Sigmoid colon (tissue), 7 donors: ENCODE measurements at regions of chr1 and their contacts with region 1.

Region 1: DNA sequence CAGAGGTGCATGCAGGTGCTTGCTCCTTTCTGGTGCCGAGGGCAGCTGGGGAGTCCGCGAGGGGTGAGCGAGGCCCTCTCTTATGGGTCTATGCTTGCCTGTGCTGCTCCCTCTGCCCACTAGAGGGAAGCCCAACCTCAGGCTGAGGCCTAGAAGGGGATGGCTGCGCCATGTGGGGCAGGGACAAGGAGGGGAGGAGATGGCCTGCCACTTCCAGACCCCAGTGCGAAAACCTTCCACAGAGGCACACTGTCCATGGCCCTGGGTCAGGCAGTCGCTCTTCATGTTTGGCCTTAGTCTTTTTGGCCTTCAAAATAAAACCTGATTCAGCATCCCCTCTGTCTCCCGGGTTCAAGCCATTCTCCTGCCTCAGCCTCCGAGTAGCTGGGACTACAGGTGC is 14.0 kb downstream of the RHBG start:
- DNase-seq: no peak
- H3K4me3 ChIP-seq: no peak overlapping the region
- H3K27ac ChIP-seq: no peak overlapping the region
- H3K4me1 ChIP-seq: peaks cover 0 to 3% (median 1%) of the 10 kb centered on the region in 4 donors
- H3K27me3 ChIP-seq: peaks cover 2 to 9% (median 4%) of the 10 kb centered on the region in 3 donors
- CTCF ChIP-seq: peak; percentile 28 to 79 (median 59)
- EP300 ChIP-seq: no peak
- POLR2A ChIP-seq: no peak

Region 2: GRCh38 chr1:156445789-156446263 is 62.8 kb after region 1 on chr1:
- intact Hi-C with region 1: loop called (anchors 1 kb)
- DNase-seq: peak; percentile 86
- H3K4me3 ChIP-seq: no peak overlapping the region
- H3K27ac ChIP-seq: no peak overlapping the region
- H3K4me1 ChIP-seq: peaks cover 0 to 4% (median 2%) of the 10 kb centered on the region in 4 donors
- H3K27me3 ChIP-seq: peaks cover under 1 to 46% (median 10%) of the 10 kb centered on the region in 3 donors
- CTCF ChIP-seq: peak; percentile 89 to 97 (median 93)
- EP300 ChIP-seq: no peak
- POLR2A ChIP-seq: no peak

Region 3: DNA sequence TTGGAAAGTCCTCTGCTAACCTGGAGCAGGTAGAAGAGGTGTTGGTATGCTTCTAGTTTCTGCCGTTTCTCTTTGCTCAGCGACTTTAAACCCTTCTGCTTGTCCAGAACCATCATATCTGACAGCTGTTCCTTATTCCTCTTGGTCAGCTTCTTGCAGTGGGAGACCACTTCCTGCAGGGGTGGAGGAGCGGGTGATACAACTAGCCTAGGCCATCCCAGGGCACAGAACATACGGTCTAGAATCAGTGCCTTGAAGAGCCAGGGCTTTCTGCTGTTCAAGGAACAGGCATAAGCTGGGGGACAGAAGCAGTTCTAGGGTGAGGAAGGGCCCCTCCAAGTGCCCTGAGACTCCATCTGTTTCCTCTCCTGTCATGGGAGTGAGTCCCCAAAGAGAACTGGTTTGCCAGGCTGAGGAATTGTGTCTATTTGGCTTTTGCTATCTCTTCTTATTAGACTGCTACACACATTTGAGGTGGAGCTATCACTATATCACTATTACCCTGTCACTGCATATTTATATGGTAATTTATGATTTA is 156.9 kb after region 1 on chr1:
- intact Hi-C with region 1: loop called (anchors 10 kb)
- DNase-seq: no peak
- H3K4me3 ChIP-seq: no peak overlapping the region
- H3K27ac ChIP-seq: no peak overlapping the region
- H3K4me1 ChIP-seq: no peaks in the 10 kb centered on the region
- H3K27me3 ChIP-seq: no peaks in the 10 kb centered on the region
- CTCF ChIP-seq: no peak
- EP300 ChIP-seq: no peak
- POLR2A ChIP-seq: no peak

Region 4: DNA sequence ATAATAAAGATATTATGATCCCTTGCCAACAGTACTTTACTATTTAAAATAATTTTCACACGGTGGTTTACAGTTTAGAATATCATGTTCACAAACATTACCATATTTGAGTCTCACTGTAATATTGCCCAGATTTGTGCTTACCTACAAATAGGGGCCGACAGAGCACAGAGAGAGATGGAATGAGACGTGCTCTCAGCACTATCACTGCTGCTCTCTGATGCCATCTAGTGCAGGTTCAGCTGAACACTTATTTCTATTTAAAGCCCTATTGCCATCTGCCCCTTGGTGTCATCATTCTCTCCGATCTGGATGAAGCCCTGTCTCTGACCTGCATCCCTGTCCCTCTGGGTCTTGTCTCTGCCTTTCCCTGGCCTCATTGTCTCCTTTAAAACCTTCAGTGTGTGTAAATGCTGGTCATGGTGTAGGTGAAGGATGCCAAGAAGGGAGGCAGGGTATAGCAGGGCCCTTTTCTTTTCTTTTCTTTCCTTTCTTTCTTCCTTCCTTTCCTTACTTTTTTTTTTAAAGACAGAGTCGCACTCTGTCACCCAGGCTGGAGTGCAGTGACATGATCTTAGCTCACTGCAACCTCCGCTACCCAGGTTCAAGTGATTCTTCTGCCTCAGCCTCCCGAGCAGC is 225.1 kb after region 1 on chr1:
- intact Hi-C with region 1: loop called (anchors 5 kb)
- DNase-seq: peak; percentile 80
- H3K4me3 ChIP-seq: no peak overlapping the region
- H3K27ac ChIP-seq: peak overlapping the region in 2 of 4 donors; percentile 12 to 46
- H3K4me1 ChIP-seq: peaks cover 0 to 9% (median 7%) of the 10 kb centered on the region in 4 donors
- H3K27me3 ChIP-seq: no peaks in the 10 kb centered on the region
- CTCF ChIP-seq: peak; percentile 77 to 89 (median 82)
- EP300 ChIP-seq: no peak
- POLR2A ChIP-seq: no peak